ENCODE measurements at regions of chr13 and their contacts with region 1.

Region 1: GRCh38 chr13:102800145-102801041 is 1.5 kb downstream of the BIVM start:
- DNase-seq: peak; percentile 90
- ATAC-seq: peak; percentile 82
- H3K4me3 Mint-ChIP-seq: peak overlapping the region; percentile 96
- H3K27ac Mint-ChIP-seq: peak overlapping the region; percentile 86
- H3K4me1 Mint-ChIP-seq: peaks cover 44% of the 10 kb centered on the region
- H3K27me3 Mint-ChIP-seq: no peaks in the 10 kb centered on the region

Region 2: GRCh38 chr13:102773441-102774215 is 26.8 kb before region 1 on chr13 and contains the start of gene TEX30:
- CTCF ChIA-PET with region 1: interaction called, 40 read pairs
- DNase-seq: peak; percentile 89
- ATAC-seq: peak; percentile 95
- H3K4me3 Mint-ChIP-seq: peak within 1 kb of the TSS; percentile 93
- H3K27ac Mint-ChIP-seq: peak within 1 kb of the TSS; percentile 96
- H3K4me1 Mint-ChIP-seq: peaks cover 54% of the 10 kb centered on the region
- H3K27me3 Mint-ChIP-seq: no peaks in the 10 kb centered on the region
- total RNA-seq, gene TEX30: 32.4 to 69.5 TPM

Region 3: DNA sequence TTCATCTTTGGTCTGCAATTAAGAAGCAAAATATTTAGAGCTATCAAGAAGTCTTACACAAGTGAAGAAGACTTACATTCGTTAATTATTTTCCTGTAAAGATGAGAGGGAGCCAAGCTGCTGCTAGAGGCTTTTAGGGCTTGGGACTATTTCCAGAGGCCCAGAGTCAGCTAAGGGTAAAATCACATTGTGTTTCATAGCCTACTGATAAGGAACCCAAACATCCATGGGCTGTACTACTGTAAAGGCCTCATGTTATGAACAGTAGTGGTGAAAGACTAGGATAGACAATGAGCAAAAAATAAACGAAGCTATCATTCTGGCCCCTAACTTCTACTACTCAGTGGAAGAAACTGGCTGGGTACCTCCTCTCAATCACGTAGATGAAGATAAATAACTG is 15.9 kb before region 1 on chr13:
- CTCF ChIA-PET with region 1: interaction called, 11 read pairs
- DNase-seq: no peak
- ATAC-seq: no peak
- H3K4me3 Mint-ChIP-seq: no peak overlapping the region
- H3K27ac Mint-ChIP-seq: no peak overlapping the region
- H3K4me1 Mint-ChIP-seq: peaks cover 14% of the 10 kb centered on the region
- H3K27me3 Mint-ChIP-seq: no peaks in the 10 kb centered on the region

Region 4: GRCh38 chr13:102825921-102826706 is 25.7 kb after region 1 on chr13:
- CTCF ChIA-PET with region 1: no interaction called
- DNase-seq: no peak
- ATAC-seq: no peak
- H3K4me3 Mint-ChIP-seq: no peak overlapping the region
- H3K27ac Mint-ChIP-seq: no peak overlapping the region
- H3K4me1 Mint-ChIP-seq: no peaks in the 10 kb centered on the region
- H3K27me3 Mint-ChIP-seq: no peaks in the 10 kb centered on the region

Region 5: DNA sequence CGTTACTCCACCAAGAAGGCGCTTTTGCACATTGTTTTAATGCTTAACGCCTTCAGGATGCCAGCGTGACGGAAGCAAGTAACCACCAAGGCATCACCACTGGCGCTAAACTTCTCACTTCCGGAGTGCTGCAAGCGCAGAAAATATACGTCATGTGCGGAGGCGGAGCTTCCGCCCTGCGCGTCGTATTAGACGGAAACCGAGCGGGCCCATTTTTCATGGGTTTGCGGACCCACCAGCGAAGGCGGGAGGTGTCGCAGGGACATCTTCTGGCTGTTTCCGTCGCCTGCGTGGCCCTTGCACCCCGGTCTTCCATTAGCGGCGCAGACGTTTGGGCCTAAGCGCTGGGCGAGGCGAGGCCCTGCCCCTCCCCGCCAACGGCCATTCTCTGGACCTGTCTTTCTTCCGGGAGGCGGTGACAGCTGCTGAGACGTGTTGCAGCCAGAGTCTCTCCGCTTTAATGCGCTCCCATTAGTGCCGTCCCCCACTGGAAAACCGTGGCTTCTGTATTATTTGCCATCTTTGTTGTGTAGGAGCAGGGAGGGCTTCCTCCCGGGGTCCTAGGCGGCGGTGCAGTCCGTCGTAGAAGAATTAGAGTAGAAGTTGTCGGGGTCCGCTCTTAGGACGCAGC is 45.4 kb after region 1 on chr13 and contains the start of gene ERCC5:
- CTCF ChIA-PET with region 1: interaction called, 22 read pairs
- DNase-seq: peak; percentile 97
- ATAC-seq: peak; percentile 88
- H3K4me3 Mint-ChIP-seq: peak within 1 kb of the TSS; percentile 99
- H3K27ac Mint-ChIP-seq: peak within 1 kb of the TSS; percentile 99
- H3K4me1 Mint-ChIP-seq: peaks cover 42% of the 10 kb centered on the region
- H3K27me3 Mint-ChIP-seq: no peaks in the 10 kb centered on the region
- total RNA-seq, gene ERCC5: 75.8 to 76.1 TPM